Right ventricle myocardium superior (tissue), 1 donor: ENCODE measurements at regions of chr1 and their contacts with region 1.

Region 1: GRCh38 chr1:6396998-6397397 is 3.4 kb upstream of the ACOT7 start:
- DNase-seq: no peak
- ATAC-seq: no peak

Region 2: DNA sequence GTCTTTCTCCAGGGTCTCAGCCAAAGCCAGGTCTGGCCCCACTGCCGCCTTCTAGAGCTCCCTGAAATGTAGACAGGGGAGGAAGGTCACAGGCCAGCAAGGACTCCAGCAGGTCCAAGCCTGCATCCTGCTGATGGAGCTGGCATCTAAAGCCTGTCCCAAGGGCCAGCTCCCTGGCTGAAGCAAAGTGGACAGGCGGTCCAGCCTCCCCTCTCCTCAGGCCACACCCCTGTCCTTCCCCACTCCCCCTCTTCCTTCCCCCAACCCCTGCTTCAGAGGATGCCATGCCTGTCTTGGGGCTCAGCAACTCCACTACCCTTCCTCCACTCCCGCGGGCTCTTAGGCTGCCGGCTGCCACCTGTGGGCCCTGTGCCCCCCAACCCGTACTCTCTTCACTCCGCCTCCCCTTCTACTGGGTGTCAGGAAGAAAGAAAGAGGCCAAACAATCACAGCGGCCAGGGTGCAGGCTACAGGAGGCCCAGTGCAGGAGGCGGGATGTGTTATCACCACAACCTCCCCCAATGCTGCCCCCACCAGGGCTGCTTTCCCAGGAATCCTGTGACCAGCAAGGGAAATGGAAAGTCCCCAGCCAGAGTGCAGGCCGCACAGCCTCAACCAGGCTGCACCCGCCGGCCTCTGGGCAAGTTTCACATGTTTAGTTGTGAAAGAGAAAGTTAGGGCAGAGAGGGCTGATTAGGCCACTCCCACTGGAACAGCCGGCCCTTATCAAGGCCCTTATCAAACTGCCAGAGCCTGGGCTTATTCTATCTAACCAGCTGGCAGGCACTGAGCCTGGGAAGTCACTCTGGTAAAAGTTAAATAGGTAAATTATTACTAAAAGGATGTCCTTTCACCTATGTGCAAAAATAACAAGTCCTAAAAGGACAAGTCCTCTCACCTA is 37.5 kb before region 1 on chr1:
- intact Hi-C with region 1: loop called (anchors 5 kb)
- DNase-seq: peak; percentile 74
- ATAC-seq: peak; percentile 80

Region 3: DNA sequence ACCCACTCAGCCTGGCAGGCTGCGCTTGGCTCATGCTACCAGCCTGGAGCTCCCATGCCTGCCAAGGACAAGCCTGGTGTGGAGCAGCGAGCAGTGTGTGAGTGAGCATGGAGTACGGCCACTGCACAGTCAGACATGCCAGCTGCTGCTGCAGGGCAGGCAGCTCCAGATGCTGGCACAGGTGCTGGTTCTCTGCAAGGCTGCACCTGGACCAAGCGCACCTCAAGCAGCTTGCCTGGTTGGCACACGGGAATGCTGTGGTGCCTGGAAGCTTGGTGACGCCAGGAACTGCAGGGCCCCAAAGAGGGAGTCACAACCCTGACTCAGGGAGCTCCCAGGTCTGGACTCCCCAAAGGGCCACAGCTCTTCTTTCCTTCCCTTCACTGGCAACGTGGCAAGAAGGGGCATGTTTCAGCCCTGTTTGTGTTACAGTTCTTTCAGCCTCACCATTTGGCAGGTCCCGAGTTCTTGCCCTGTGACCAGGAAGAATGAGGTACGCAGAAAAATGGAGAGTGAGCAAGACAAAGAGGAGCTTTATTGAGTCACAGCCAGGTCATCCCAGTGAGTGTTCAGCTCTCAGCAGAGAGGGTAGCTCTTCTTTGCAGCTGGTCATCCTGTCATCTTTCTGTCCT is 29.5 kb before region 1 on chr1:
- intact Hi-C with region 1: loop called (anchors 5 kb)
- DNase-seq: peak; percentile 78
- ATAC-seq: peak; percentile 91